ENCODE measurements at regions of chrX and their contacts with region 1.

Region 1: GRCh38 chrX:154370882-154371770 is 3.3 kb downstream of the FLNA start:
- DNase-seq: peak; percentile 89 to 92 (median 92)
- H3K4me3 ChIP-seq: peak overlapping the region in 1 of 2 donors; percentile 59
- H3K4me3 Mint-ChIP-seq: peak overlapping the region; percentile 78 to 93 (median 86)
- H3K27ac ChIP-seq: peak overlapping the region; percentile 92
- H3K27ac Mint-ChIP-seq: peak overlapping the region; percentile 78 to 94 (median 87)
- H3K4me1 ChIP-seq: peaks cover 51% of the 10 kb centered on the region
- H3K4me1 Mint-ChIP-seq: peaks cover 3 to 42% (median 25%) of the 10 kb centered on the region in 4 donors
- H3K27me3 ChIP-seq: no peaks in the 10 kb centered on the region
- H3K27me3 Mint-ChIP-seq: no peaks in the 10 kb centered on the region

Region 2: DNA sequence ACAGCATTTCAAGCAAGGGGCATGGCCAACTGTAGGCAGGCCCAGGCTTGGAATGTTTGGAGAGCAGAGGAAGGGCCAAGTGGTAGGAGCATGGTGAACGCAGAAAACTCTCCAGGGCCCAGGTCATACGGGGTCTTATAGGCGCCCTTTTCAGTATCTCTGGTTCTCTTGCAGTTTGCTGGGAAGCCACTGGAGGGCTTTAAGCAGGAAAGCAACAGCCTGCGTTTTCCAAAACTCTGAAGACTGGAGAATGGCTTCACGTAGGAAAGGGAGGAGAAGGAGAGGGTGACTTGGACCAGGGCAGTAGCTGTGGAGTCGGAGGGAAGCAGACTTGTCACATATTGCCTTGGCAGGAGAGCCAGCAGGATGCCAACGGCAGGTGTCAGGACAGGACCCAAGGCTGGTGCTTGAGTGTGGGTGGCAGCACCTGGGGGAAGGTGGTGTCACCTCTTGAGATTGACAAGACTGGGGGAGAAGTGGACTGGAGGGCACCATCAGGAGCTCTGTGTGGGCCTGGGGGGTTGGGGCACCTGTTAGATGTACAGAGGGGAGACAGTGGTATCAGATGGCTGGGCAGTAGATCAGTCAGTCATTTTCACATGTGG is 53.6 kb before region 1 on chrX:
- CTCF ChIA-PET with region 1: interaction called, 11 read pairs
- POLR2A ChIA-PET with region 1: no interaction called
- intact Hi-C with region 1: no loop called
- DNase-seq: no peak
- H3K4me3 ChIP-seq: no peak overlapping the region
- H3K4me3 Mint-ChIP-seq: peak overlapping the region in 5 of 8 donors; percentile 39 to 66 (median 58)
- H3K27ac ChIP-seq: no peak overlapping the region
- H3K27ac Mint-ChIP-seq: peak overlapping the region in 6 of 7 donors; percentile 15 to 87 (median 61)
- H3K4me1 ChIP-seq: peaks cover 32% of the 10 kb centered on the region
- H3K4me1 Mint-ChIP-seq: peaks cover 21 to 41% (median 31%) of the 10 kb centered on the region in 4 donors
- H3K27me3 ChIP-seq: no peaks in the 10 kb centered on the region
- H3K27me3 Mint-ChIP-seq: no peaks in the 10 kb centered on the region

Region 3: GRCh38 chrX:154327038-154327820 is 43.9 kb before region 1 on chrX:
- CTCF ChIA-PET with region 1: interaction called, 12 read pairs
- POLR2A ChIA-PET with region 1: interaction called, 14 read pairs
- intact Hi-C with region 1: no loop called
- DNase-seq: peak; percentile 60 to 68 (median 63)
- H3K4me3 ChIP-seq: peak overlapping the region; percentile 23 to 37
- H3K4me3 Mint-ChIP-seq: peak overlapping the region; percentile 65 to 87 (median 74)
- H3K27ac ChIP-seq: peak overlapping the region; percentile 26
- H3K27ac Mint-ChIP-seq: peak overlapping the region; percentile 81 to 97 (median 90)
- H3K4me1 ChIP-seq: peaks cover 49% of the 10 kb centered on the region
- H3K4me1 Mint-ChIP-seq: peaks cover 24 to 50% (median 35%) of the 10 kb centered on the region in 4 donors
- H3K27me3 ChIP-seq: no peaks in the 10 kb centered on the region
- H3K27me3 Mint-ChIP-seq: no peaks in the 10 kb centered on the region

Region 4: GRCh38 chrX:154348114-154348531 is 23.0 kb before region 1 on chrX:
- CTCF ChIA-PET with region 1: interaction called, 3 read pairs
- POLR2A ChIA-PET with region 1: interaction called, 245 read pairs
- intact Hi-C with region 1: no loop called
- DNase-seq: peak in 3 of 5 donors; percentile 22 to 35 (median 25)
- H3K4me3 ChIP-seq: no peak overlapping the region
- H3K4me3 Mint-ChIP-seq: peak overlapping the region; percentile 6 to 72 (median 45)
- H3K27ac ChIP-seq: no peak overlapping the region
- H3K27ac Mint-ChIP-seq: peak overlapping the region; percentile 77 to 99 (median 90)
- H3K4me1 ChIP-seq: peaks cover 59% of the 10 kb centered on the region
- H3K4me1 Mint-ChIP-seq: peaks cover 15 to 58% (median 37%) of the 10 kb centered on the region in 4 donors
- H3K27me3 ChIP-seq: no peaks in the 10 kb centered on the region
- H3K27me3 Mint-ChIP-seq: no peaks in the 10 kb centered on the region

Region 5: GRCh38 chrX:154384284-154384892 is 13.3 kb after region 1 on chrX:
- CTCF ChIA-PET with region 1: interaction called, 5 read pairs
- POLR2A ChIA-PET with region 1: interaction called, 36 read pairs
- intact Hi-C with region 1: loop called (anchors 1 kb)
- DNase-seq: peak in 1 of 5 donors; percentile 13
- H3K4me3 ChIP-seq: no peak overlapping the region
- H3K4me3 Mint-ChIP-seq: peak overlapping the region in 1 of 8 donors; percentile 48
- H3K27ac ChIP-seq: no peak overlapping the region
- H3K27ac Mint-ChIP-seq: peak overlapping the region in 6 of 7 donors; percentile 29 to 87 (median 78)
- H3K4me1 ChIP-seq: peaks cover 12% of the 10 kb centered on the region
- H3K4me1 Mint-ChIP-seq: peaks cover 3 to 17% (median 7%) of the 10 kb centered on the region in 4 donors
- H3K27me3 ChIP-seq: no peaks in the 10 kb centered on the region
- H3K27me3 Mint-ChIP-seq: no peaks in the 10 kb centered on the region

Region 6: DNA sequence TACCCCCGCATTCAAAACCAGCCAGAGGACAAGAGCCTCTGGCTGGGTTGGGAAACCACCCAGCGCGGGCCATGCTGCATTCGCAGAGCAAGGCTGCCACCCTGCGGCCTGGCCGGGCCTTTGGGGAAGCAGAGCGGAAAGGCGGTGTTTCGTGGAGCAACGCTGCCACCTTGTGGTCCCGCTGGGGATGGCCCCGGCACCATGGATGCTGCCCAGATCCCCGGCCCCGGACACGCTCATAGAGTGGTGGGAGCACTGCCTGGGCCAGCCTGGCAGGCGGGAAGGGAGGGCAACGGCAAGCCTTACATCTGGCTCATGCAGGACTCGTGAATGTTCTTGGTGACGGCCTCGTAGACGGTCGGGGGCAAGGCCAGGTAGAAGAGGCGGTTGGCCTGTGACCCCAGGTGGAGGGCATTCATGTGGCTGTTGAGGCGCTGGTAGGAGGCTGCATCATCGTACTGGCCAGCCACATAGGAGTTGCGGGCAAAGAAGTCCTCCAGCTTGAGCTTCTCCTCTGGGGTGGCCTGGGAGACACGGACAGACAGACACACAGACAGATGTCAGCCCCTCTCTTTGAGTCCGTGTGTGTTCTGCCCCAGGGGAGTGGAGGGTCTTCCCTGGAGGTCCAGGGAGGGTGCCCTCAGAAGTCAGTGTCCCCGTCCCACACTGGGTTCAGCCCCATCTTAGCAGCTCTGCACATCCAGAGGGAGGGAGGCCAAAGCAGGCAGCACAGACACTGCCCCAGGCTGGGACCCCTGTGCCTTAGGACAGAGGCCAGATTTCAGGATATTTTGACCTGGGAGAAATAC is 163.9 kb after region 1 on chrX:
- CTCF ChIA-PET with region 1: interaction called, 4 read pairs
- POLR2A ChIA-PET with region 1: interaction called, 3 read pairs
- intact Hi-C with region 1: loop called (anchors 1 kb)
- DNase-seq: peak; percentile 85 to 92 (median 89)
- H3K4me3 ChIP-seq: no peak overlapping the region
- H3K4me3 Mint-ChIP-seq: no peak overlapping the region
- H3K27ac ChIP-seq: peak overlapping the region; percentile 43
- H3K27ac Mint-ChIP-seq: peak overlapping the region in 6 of 7 donors; percentile 22 to 86 (median 72)
- H3K4me1 ChIP-seq: peaks cover 8% of the 10 kb centered on the region
- H3K4me1 Mint-ChIP-seq: peaks cover 2 to 14% (median 5%) of the 10 kb centered on the region in 4 donors
- H3K27me3 ChIP-seq: no peaks in the 10 kb centered on the region
- H3K27me3 Mint-ChIP-seq: no peaks in the 10 kb centered on the region